ENCODE measurements at regions of chr14 and their contacts with region 1.

Region 1: GRCh38 chr14:106665814-106666213 is 1139.4 kb downstream of the TMEM121 start:
- DNase-seq: peak; percentile 10
- ATAC-seq: no peak
- H3K4me3 Mint-ChIP-seq: no peak overlapping the region
- H3K27ac Mint-ChIP-seq: no peak overlapping the region
- H3K4me1 Mint-ChIP-seq: peaks cover 19% of the 10 kb centered on the region
- H3K27me3 Mint-ChIP-seq: peaks cover 5% of the 10 kb centered on the region
- CTCF ChIP-seq: no peak

Region 2: GRCh38 chr14:106452426-106452825 is 213.4 kb before region 1 on chr14:
- CTCF ChIA-PET with region 1: no interaction called
- POLR2A ChIA-PET with region 1: no interaction called
- intact Hi-C with region 1: no loop called
- DNase-seq: no peak
- ATAC-seq: no peak
- H3K4me3 Mint-ChIP-seq: no peak overlapping the region
- H3K27ac Mint-ChIP-seq: no peak overlapping the region
- H3K4me1 Mint-ChIP-seq: no peaks in the 10 kb centered on the region
- H3K27me3 Mint-ChIP-seq: no peaks in the 10 kb centered on the region
- CTCF ChIP-seq: no peak

Region 3: GRCh38 chr14:106622200-106622745 is 43.5 kb before region 1 on chr14:
- CTCF ChIA-PET with region 1: interaction called, 15 read pairs
- POLR2A ChIA-PET with region 1: no interaction called
- intact Hi-C with region 1: no loop called
- DNase-seq: peak; percentile 63
- ATAC-seq: peak; percentile 66
- H3K4me3 Mint-ChIP-seq: no peak overlapping the region
- H3K27ac Mint-ChIP-seq: no peak overlapping the region
- H3K4me1 Mint-ChIP-seq: peaks cover 12% of the 10 kb centered on the region
- H3K27me3 Mint-ChIP-seq: peaks cover 22% of the 10 kb centered on the region
- CTCF ChIP-seq: no peak

Region 4: DNA sequence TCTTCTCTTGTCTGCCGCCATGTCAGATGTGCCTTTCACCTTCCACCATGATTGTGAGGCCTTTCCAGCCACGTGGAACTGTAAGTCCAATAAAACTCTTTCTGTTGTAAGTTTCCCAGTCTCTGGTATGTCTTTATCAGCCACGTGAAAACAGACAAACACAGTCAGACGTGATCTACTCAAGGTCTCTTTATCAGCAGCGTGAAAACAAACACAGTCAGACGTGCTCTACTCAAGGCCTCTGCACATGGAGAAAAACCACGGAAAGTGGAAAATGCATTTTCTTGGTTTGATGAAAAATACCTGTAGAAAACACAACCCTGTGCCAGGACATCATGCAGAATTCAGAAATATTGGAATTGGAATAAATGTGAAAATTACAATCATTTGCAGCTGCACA is 23.7 kb before region 1 on chr14:
- CTCF ChIA-PET with region 1: interaction called, 25 read pairs
- POLR2A ChIA-PET with region 1: no interaction called
- intact Hi-C with region 1: no loop called
- DNase-seq: no peak
- ATAC-seq: no peak
- H3K4me3 Mint-ChIP-seq: no peak overlapping the region
- H3K27ac Mint-ChIP-seq: no peak overlapping the region
- H3K4me1 Mint-ChIP-seq: peaks cover 4% of the 10 kb centered on the region
- H3K27me3 Mint-ChIP-seq: peaks cover 4% of the 10 kb centered on the region
- CTCF ChIP-seq: no peak

Region 5: GRCh38 chr14:106681568-106681967 is 15.8 kb after region 1 on chr14:
- CTCF ChIA-PET with region 1: interaction called, 98 read pairs
- POLR2A ChIA-PET with region 1: no interaction called
- intact Hi-C with region 1: no loop called
- DNase-seq: peak; percentile 27
- ATAC-seq: peak; percentile 97
- H3K4me3 Mint-ChIP-seq: no peak overlapping the region
- H3K27ac Mint-ChIP-seq: no peak overlapping the region
- H3K4me1 Mint-ChIP-seq: no peaks in the 10 kb centered on the region
- H3K27me3 Mint-ChIP-seq: peaks cover 13% of the 10 kb centered on the region
- CTCF ChIP-seq: peak; percentile 56

Region 6: GRCh38 chr14:106776395-106776983 is 110.7 kb after region 1 on chr14:
- CTCF ChIA-PET with region 1: interaction called, 10 read pairs
- POLR2A ChIA-PET with region 1: no interaction called
- intact Hi-C with region 1: no loop called
- DNase-seq: no peak
- ATAC-seq: no peak
- H3K4me3 Mint-ChIP-seq: no peak overlapping the region
- H3K27ac Mint-ChIP-seq: no peak overlapping the region
- H3K4me1 Mint-ChIP-seq: peaks cover 17% of the 10 kb centered on the region
- H3K27me3 Mint-ChIP-seq: no peaks in the 10 kb centered on the region
- CTCF ChIP-seq: no peak

Region 7: GRCh38 chr14:106845286-106846087 is 179.7 kb after region 1 on chr14:
- CTCF ChIA-PET with region 1: no interaction called
- POLR2A ChIA-PET with region 1: no interaction called
- intact Hi-C with region 1: no loop called
- DNase-seq: peak; percentile 82
- ATAC-seq: peak; percentile 57
- H3K4me3 Mint-ChIP-seq: peak overlapping the region; percentile 86
- H3K27ac Mint-ChIP-seq: peak overlapping the region; percentile 27
- H3K4me1 Mint-ChIP-seq: peaks cover 33% of the 10 kb centered on the region
- H3K27me3 Mint-ChIP-seq: no peaks in the 10 kb centered on the region
- CTCF ChIP-seq: no peak